Naive thymus-derived CD4-positive, alpha-beta T cell (primary cell): ENCODE measurements at regions of chr2 and their contacts with region 1.

Region 1: DNA sequence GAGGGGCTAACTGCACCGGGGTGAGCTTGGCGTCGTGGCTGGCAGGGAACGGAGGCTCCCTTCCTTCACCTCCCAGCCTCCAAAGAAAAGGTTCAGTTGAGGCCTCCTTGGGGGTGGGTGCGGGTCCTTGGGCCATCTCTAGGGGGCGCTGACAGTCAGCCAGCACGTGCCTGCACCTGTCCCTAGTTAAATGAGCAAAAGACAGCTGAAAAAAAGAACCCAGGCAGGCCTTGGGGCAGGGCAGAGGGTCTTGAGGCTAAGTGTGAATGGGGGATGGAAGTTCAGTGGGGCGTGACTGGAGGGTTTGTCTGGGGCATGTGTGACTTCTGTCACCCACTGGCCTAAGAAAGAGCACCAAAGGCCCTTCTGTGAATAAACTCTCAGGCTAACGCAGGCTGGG is 56.4 kb downstream of the ZFP36L2 start:
- DNase-seq: peak in 8 of 9 donors; percentile 51 to 74 (median 64)
- ATAC-seq: peak; percentile 26
- H3K4me3 ChIP-seq: peak overlapping the region; percentile 35
- H3K4me3 Mint-ChIP-seq: peak overlapping the region; percentile 68 to 91 (median 84)
- H3K27ac ChIP-seq: peak overlapping the region; percentile 99
- H3K27ac Mint-ChIP-seq: peak overlapping the region; percentile 94 to 100 (median 98)
- H3K4me1 ChIP-seq: peaks cover 64 to 70% of the 10 kb centered on the region in 2 donors
- H3K4me1 Mint-ChIP-seq: peaks cover 52 to 89% (median 76%) of the 10 kb centered on the region in 7 donors
- H3K27me3 ChIP-seq: no peaks in the 10 kb centered on the region
- H3K27me3 Mint-ChIP-seq: no peaks in the 10 kb centered on the region

Region 2: GRCh38 chr2:43024515-43025011 is 145.4 kb before region 1 on chr2:
- CTCF ChIA-PET with region 1: no interaction called
- POLR2A ChIA-PET with region 1: interaction called, 3 read pairs
- intact Hi-C with region 1: loop called in 1 of 2 experiments (anchors 1 kb)
- DNase-seq: peak in 5 of 9 donors; percentile 21 to 43 (median 25)
- ATAC-seq: peak; percentile 65
- H3K4me3 ChIP-seq: no peak overlapping the region
- H3K4me3 Mint-ChIP-seq: peak overlapping the region in 4 of 10 donors; percentile 1 to 63 (median 31)
- H3K27ac ChIP-seq: no peak overlapping the region
- H3K27ac Mint-ChIP-seq: peak overlapping the region in 7 of 9 donors; percentile 25 to 92 (median 47)
- H3K4me1 ChIP-seq: peaks cover 0 to 9% of the 10 kb centered on the region in 2 donors
- H3K4me1 Mint-ChIP-seq: peaks cover 0 to 50% (median 34%) of the 10 kb centered on the region in 7 donors
- H3K27me3 ChIP-seq: no peaks in the 10 kb centered on the region
- H3K27me3 Mint-ChIP-seq: peaks cover 0 to 9% (median 0%) of the 10 kb centered on the region in 5 donors

Region 3: GRCh38 chr2:43051316-43051715 is 118.7 kb before region 1 on chr2:
- CTCF ChIA-PET with region 1: no interaction called
- POLR2A ChIA-PET with region 1: interaction called, 4 read pairs
- intact Hi-C with region 1: loop called in 1 of 2 experiments (anchors 5 kb)
- DNase-seq: peak in 7 of 9 donors; percentile 27 to 55 (median 42)
- ATAC-seq: peak; percentile 77
- H3K4me3 ChIP-seq: no peak overlapping the region
- H3K4me3 Mint-ChIP-seq: peak overlapping the region in 7 of 10 donors; percentile 11 to 67 (median 37)
- H3K27ac ChIP-seq: no peak overlapping the region
- H3K27ac Mint-ChIP-seq: peak overlapping the region in 6 of 9 donors; percentile 28 to 85 (median 65)
- H3K4me1 ChIP-seq: peaks cover 0 to 11% of the 10 kb centered on the region in 2 donors
- H3K4me1 Mint-ChIP-seq: peaks cover 29 to 46% (median 37%) of the 10 kb centered on the region in 7 donors
- H3K27me3 ChIP-seq: no peaks in the 10 kb centered on the region
- H3K27me3 Mint-ChIP-seq: peaks cover 0 to 16% (median 0%) of the 10 kb centered on the region in 5 donors

Region 4: DNA sequence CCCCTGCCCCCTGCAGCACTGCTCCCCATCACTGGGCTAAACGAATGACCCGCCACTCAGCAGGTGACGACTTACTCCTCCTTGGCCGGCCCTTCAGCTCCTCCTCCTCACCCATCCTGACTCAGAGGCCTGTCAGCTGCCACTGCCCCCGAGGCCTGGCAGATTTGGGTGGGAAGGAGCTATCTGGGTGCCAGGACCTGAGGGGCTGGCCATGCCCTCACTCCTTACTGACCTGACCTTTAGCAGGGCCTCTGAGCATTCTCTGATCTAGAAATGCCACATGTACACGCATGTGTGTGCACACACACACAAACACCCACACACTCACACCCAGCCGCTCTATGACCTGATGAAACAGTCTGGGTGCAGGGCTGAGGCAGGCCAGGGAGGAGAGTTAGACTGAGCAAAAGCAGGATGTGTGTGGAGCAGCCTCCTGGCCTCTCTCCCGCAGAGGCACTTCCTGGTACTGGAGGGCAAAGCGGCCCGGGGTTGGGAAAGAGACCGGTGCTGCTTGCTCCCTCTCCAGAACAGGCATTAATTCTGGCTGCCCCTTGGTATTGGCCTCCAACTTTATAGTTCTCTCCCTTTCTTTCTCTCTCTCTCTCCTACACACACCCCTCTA is 11.6 kb before region 1 on chr2:
- CTCF ChIA-PET with region 1: interaction called, 5 read pairs
- POLR2A ChIA-PET with region 1: interaction called, 1,274 read pairs
- intact Hi-C with region 1: loop called (anchors 1 kb)
- DNase-seq: peak in 3 of 9 donors; percentile 70 to 72 (median 71)
- ATAC-seq: peak; percentile 59
- H3K4me3 ChIP-seq: peak overlapping the region; percentile 18
- H3K4me3 Mint-ChIP-seq: peak overlapping the region; percentile 81 to 91 (median 86)
- H3K27ac ChIP-seq: peak overlapping the region; percentile 92
- H3K27ac Mint-ChIP-seq: peak overlapping the region; percentile 96 to 100 (median 99)
- H3K4me1 ChIP-seq: peaks cover 53 to 62% of the 10 kb centered on the region in 2 donors
- H3K4me1 Mint-ChIP-seq: peaks cover 47 to 95% (median 69%) of the 10 kb centered on the region in 7 donors
- H3K27me3 ChIP-seq: no peaks in the 10 kb centered on the region
- H3K27me3 Mint-ChIP-seq: no peaks in the 10 kb centered on the region

Region 5: DNA sequence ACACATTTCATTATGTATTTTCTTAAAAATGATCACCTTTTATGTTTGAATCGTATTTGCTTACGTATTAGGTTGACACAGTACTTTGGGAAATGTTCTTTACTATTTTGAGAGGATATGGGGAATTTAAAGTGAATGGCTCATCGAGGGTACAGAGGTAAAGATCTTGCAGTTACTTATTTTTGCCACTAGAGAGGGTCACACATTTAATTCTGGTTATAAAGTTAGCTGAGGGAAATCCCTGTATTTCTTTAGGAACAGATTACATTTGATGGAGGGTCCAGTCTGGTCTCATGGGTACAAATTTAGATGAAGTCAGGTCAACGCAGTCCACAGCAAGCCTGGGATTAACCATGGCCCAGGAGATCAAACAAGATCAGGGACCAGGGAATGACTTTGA is 628.3 kb after region 1 on chr2:
- CTCF ChIA-PET with region 1: no interaction called
- POLR2A ChIA-PET with region 1: no interaction called
- intact Hi-C with region 1: no loop called
- DNase-seq: no peak
- ATAC-seq: no peak
- H3K4me3 ChIP-seq: no peak overlapping the region
- H3K4me3 Mint-ChIP-seq: no peak overlapping the region
- H3K27ac ChIP-seq: no peak overlapping the region
- H3K27ac Mint-ChIP-seq: no peak overlapping the region
- H3K4me1 ChIP-seq: no peaks in the 10 kb centered on the region
- H3K4me1 Mint-ChIP-seq: peaks cover 0 to 2% (median 0%) of the 10 kb centered on the region in 7 donors
- H3K27me3 ChIP-seq: no peaks in the 10 kb centered on the region
- H3K27me3 Mint-ChIP-seq: no peaks in the 10 kb centered on the region